Endothelial cell of umbilical vein (primary cell): ENCODE measurements at regions of chr4 and their contacts with region 1.

Region 1: DNA sequence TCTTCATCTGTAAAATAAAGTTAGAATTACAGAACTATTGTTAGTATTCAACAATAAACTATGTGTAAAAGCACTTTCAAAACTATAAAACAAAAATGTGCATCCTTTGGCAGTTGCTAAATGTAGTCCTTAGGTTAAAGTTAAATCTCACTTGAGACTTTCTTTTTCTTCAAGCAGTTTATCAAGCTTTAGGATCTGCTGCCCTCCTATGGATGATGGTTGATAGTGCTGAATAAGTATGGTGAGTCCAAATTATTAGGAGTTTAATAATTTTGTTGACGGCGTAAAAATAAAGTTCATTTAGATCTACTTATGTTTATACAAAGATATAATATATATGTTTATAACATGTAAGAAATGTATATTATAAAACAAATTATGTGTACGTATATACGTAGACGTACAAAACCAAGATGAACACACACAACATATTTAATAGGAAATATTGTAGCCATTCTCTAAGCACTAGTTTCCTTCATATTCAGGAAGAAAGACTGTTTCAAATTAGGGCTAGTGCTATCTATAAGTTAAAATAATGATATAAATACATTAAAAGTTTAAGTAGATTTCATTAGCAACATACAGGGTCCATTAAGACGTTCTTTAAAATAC is 22.3 kb downstream of the UGT2A2 start:
- DNase-seq: peak; percentile 31
- H3K4me3 ChIP-seq: no peak overlapping the region
- H3K27ac ChIP-seq: no peak overlapping the region
- H3K4me1 ChIP-seq: no peaks in the 10 kb centered on the region
- H3K27me3 ChIP-seq: no peaks in the 10 kb centered on the region
- CTCF ChIP-seq: peak; percentile 14 to 31
- POLR2A ChIP-seq: no peak

Region 2: DNA sequence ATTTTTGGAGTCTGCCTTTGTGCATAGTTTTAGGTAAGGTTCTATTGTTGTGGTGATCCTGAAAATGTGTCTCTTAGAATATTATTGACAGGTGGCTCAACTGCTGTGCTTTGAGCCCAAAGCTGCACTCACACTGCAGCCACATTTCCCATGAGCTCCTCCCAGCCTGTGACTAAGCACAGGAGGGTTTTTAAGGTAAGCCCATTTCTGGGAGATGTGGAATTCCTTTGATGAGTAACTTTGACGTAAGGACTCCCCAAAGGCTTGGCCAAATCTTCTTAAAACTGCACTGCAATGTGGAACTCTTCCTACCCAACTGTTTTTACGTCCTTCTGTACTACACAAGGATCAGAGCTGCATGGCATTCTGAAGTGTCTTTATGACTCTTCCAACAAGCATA is 1633.9 kb before region 1 on chr4:
- CTCF ChIA-PET with region 1: no interaction called
- POLR2A ChIA-PET with region 1: no interaction called
- dilution Hi-C with region 1: no loop called
- intact Hi-C with region 1: no loop called
- DNase-seq: no peak
- H3K4me3 ChIP-seq: no peak overlapping the region
- H3K27ac ChIP-seq: no peak overlapping the region
- H3K4me1 ChIP-seq: no peaks in the 10 kb centered on the region
- H3K27me3 ChIP-seq: no peaks in the 10 kb centered on the region
- CTCF ChIP-seq: no peak
- POLR2A ChIP-seq: no peak

Region 3: DNA sequence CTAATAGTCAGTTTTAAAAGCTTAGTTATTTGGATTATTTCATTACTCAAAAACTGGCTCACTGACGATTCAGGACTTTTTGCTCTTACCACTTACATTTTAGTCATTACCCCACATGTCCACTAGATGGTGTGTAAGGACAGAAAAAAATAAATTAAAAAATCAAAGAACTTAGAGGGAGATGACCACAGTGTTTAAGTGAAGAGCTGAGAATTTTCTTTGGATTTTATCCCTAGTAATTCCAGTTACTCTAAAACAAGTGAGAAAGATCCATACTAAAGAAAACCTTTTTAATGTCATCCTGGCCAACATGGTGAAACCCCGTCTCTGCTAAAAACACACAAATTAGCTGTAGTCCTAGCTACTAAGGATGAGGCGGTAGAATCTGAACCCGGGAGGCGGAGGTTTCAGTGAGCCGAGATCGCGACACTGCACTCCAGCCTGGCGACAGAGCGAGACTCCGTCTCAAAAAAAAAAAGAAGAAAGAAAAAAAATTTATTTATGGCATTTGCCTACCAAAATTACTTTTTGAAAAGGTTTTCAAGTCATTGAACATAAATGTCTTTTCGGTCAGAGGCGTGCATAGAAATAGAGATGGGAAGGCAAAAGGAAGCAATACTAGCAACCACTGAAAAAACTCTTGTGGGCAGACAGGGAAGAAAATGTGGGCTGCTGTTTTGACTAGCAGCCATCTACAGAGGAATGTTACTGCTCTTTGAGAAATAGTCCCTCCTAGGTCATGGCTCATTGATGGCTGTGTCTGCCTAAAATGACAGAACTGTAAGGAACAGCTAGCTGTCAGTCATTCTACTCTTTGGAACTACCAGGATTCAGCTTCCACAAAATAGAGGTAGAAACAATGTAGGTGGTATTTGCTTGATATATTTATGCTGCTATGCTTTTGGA is 1345.1 kb before region 1 on chr4:
- CTCF ChIA-PET with region 1: interaction called, 10 read pairs
- POLR2A ChIA-PET with region 1: no interaction called
- dilution Hi-C with region 1: no loop called
- intact Hi-C with region 1: no loop called
- DNase-seq: peak; percentile 73
- H3K4me3 ChIP-seq: no peak overlapping the region
- H3K27ac ChIP-seq: no peak overlapping the region
- H3K4me1 ChIP-seq: no peaks in the 10 kb centered on the region
- H3K27me3 ChIP-seq: peaks cover 10 to 15% of the 10 kb centered on the region in 2 experiments
- CTCF ChIP-seq: peak; percentile 37 to 42
- POLR2A ChIP-seq: no peak

Region 4: DNA sequence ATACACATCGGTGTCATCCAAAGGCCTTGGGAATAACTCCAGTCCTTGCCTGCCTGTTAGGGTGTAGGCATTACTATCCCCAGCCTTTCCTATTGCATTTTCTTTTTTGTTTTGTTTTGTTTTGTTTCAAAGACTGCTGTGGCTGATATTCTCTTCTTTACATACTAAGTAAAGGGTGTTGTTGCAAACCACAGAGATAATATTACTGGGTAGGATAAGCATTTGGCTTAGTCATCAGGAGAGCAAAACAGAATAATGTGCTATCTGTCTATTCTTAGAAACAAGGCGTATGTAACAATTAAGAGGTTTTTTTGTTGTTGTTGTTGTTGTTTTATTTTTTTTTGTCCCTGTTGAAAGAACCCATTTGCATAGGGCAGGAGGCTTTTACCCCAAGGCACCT is 295.1 kb before region 1 on chr4:
- CTCF ChIA-PET with region 1: interaction called, 8 read pairs
- POLR2A ChIA-PET with region 1: no interaction called
- dilution Hi-C with region 1: no loop called
- intact Hi-C with region 1: loop called (anchors 1 kb)
- DNase-seq: no peak
- H3K4me3 ChIP-seq: no peak overlapping the region
- H3K27ac ChIP-seq: no peak overlapping the region
- H3K4me1 ChIP-seq: no peaks in the 10 kb centered on the region
- H3K27me3 ChIP-seq: no peaks in the 10 kb centered on the region
- CTCF ChIP-seq: no peak
- POLR2A ChIP-seq: no peak

Region 5: GRCh38 chr4:69524706-69525105 is 92.5 kb before region 1 on chr4:
- CTCF ChIA-PET with region 1: no interaction called
- POLR2A ChIA-PET with region 1: no interaction called
- dilution Hi-C with region 1: no loop called
- intact Hi-C with region 1: no loop called
- DNase-seq: no peak
- H3K4me3 ChIP-seq: no peak overlapping the region
- H3K27ac ChIP-seq: no peak overlapping the region
- H3K4me1 ChIP-seq: no peaks in the 10 kb centered on the region
- H3K27me3 ChIP-seq: no peaks in the 10 kb centered on the region
- CTCF ChIP-seq: no peak
- POLR2A ChIP-seq: no peak

Region 6: GRCh38 chr4:69888336-69888735 is 271.1 kb after region 1 on chr4:
- CTCF ChIA-PET with region 1: no interaction called
- POLR2A ChIA-PET with region 1: no interaction called
- dilution Hi-C with region 1: no loop called
- intact Hi-C with region 1: no loop called
- DNase-seq: no peak
- H3K4me3 ChIP-seq: no peak overlapping the region
- H3K27ac ChIP-seq: no peak overlapping the region
- H3K4me1 ChIP-seq: no peaks in the 10 kb centered on the region
- H3K27me3 ChIP-seq: no peaks in the 10 kb centered on the region
- CTCF ChIP-seq: no peak
- POLR2A ChIP-seq: no peak